ENCODE measurements at regions of chr6 and their contacts with region 1.

Region 1: GRCh38 chr6:112018619-112019416 is 35.1 kb upstream of the CCN6 start:
- DNase-seq: no peak
- H3K4me3 Mint-ChIP-seq: no peak overlapping the region
- H3K27ac Mint-ChIP-seq: no peak overlapping the region
- H3K4me1 Mint-ChIP-seq: peaks cover 50% of the 10 kb centered on the region
- H3K27me3 Mint-ChIP-seq: no peaks in the 10 kb centered on the region

Region 2: DNA sequence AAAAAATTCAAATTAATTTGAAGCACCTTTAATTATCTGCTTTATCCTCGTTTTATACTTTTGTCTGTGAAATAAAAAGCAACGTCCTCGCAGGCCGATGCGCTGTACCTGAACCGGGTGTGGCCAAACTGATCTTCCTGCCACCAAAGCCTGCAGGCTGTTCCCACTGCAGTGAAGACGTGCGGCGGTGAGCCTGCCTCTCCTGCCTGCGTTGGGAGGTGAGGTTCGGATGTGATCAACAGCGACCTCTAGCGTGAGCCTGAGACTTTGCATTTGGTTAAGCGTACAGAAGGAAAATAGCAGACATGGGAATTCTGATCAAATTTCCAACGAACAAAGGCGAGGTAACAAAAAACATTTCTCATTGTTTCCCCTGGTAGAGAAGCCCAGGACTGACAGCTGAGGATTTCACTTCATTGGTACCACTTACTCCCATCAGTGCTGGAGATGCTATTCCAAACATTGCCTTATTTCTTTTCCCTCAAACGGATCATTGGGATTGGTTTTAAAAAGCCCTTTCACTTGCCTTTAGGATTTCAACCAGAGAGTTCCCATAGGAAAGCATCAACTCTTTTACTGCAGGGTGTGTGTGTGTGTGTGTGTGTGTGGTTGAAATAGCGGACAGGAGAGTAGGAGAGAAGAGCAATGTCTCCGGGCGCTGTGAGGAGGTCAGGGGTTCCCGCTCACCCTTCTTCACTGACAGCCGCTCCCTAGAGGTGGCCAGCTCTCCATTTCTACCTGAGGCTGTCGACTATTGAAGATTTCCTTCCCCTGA is 21.6 kb before region 1 on chr6:
- intact Hi-C with region 1: loop called (anchors 1 kb)
- DNase-seq: peak; percentile 68
- H3K4me3 Mint-ChIP-seq: peak overlapping the region; percentile 45
- H3K27ac Mint-ChIP-seq: peak overlapping the region; percentile 46
- H3K4me1 Mint-ChIP-seq: peaks cover 46% of the 10 kb centered on the region
- H3K27me3 Mint-ChIP-seq: no peaks in the 10 kb centered on the region

Region 3: GRCh38 chr6:112029045-112029822 is 10.4 kb after region 1 on chr6:
- intact Hi-C with region 1: loop called (anchors 1 kb)
- DNase-seq: peak; percentile 51
- H3K4me3 Mint-ChIP-seq: no peak overlapping the region
- H3K27ac Mint-ChIP-seq: peak overlapping the region; percentile 68
- H3K4me1 Mint-ChIP-seq: peaks cover 74% of the 10 kb centered on the region
- H3K27me3 Mint-ChIP-seq: no peaks in the 10 kb centered on the region

Region 4: GRCh38 chr6:112037783-112038216 is 19.0 kb after region 1 on chr6:
- intact Hi-C with region 1: loop called (anchors 1 kb)
- DNase-seq: no peak
- H3K4me3 Mint-ChIP-seq: no peak overlapping the region
- H3K27ac Mint-ChIP-seq: no peak overlapping the region
- H3K4me1 Mint-ChIP-seq: peaks cover 71% of the 10 kb centered on the region
- H3K27me3 Mint-ChIP-seq: no peaks in the 10 kb centered on the region